IMR-90 (cell line): ENCODE measurements at regions of chr5 and their contacts with region 1.

Region 1: DNA sequence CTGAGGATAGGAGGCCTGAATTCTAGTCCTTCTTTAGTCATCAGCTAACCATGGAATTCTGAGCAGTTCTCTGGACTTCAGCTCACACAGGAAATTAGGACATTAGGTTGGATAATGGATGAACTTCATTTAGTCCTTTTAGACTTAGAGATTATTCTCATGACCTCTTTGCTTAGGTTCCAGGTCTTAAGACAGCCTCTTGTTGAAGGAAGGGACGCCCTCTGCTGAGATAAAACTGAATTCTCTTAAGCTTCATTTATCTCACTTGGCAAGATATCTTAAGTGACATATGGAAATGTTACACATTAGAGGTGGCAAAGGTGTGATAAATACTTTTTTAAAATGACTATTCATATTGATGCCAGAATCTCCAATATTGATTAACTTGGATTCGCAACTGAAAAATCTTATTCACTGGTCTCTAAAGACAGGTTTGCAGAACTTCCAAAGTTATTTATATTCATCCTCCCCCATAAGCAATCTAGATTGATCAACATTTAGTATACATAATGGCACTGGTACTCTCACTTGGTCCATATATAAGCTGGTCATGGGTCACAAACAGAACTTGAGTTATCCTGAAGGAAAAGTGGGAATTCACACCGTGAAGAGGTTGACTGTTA is 16.9 kb upstream of the ZNF366 start:
- DNase-seq: peak; percentile 88
- ATAC-seq: peak; percentile 84
- H3K4me3 ChIP-seq: no peak overlapping the region
- H3K27ac ChIP-seq: no peak overlapping the region
- H3K4me1 ChIP-seq: peaks cover 2% of the 10 kb centered on the region; the same call in 1 of the 2 replicates
- H3K27me3 ChIP-seq: no peaks in the 10 kb centered on the region
- CTCF ChIP-seq: peak; percentile 73
- POLR2A ChIP-seq: no peak
- RAD21 ChIP-seq: peak; percentile 86

Region 2: DNA sequence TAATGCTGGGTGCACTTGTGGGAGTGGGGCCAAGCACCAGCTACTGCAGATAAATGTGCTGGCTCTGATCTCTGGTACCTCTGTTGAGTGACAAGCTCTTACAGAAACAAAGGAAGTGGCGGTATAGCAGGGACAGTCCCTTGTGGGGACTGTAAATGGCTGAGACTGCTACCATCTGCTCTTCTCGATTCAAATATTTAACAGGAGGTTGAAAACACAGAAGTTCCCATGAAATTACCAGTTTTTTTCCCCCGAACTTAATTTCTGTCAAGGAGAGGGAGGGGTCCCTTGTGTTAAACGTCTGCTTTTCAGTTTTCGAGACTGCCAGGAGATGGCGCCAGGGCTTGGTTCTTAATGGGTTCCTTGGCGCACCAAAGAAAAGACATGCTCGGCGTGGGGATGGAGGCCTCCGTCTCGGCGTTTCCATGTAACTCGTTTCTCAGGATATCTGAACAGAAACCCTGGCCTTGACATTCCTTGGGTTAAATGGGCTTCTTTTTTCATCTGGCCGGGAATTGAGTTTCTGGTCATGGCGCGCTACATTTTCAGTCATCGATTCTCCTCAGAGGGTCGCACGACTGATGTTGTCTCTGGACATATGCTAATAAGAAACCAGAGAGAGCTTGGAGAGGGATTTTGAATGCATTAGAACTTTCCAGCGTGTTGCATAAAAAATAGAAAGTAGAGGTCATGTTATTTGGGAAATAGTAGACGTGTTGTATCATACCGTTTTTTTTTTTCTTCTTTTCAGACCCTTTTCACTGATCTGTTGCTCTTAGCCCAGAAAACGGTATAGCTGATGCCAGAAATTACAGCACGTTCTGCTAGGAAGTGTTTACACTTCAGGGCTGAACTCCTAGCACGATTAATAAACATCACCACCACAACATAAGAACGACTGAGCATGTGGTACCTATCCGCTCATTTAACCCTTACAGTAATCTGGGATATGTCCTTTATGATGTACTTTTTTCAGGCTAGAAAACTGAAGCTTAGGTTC is 741.0 kb before region 1 on chr5:
- CTCF ChIA-PET with region 1: no interaction called
- POLR2A ChIA-PET with region 1: no interaction called
- dilution Hi-C with region 1: no loop called
- in situ Hi-C with region 1: no loop called
- intact Hi-C with region 1: loop called (anchors 2 kb)
- DNase-seq: peak; percentile 75
- ATAC-seq: peak; percentile 95
- H3K4me3 ChIP-seq: peak overlapping the region; percentile 7; the same call in 1 of the 2 replicates
- H3K27ac ChIP-seq: 0 out of 2 replicates have a peak overlapping the region, but pooled peaks have one; percentile 7
- H3K4me1 ChIP-seq: peaks cover 2% of the 10 kb centered on the region; the same call in 1 of the 2 replicates
- H3K27me3 ChIP-seq: peaks cover 12% of the 10 kb centered on the region
- CTCF ChIP-seq: peak; percentile 85
- POLR2A ChIP-seq: 0 out of 2 replicates have a peak, but pooled peaks have one; percentile 40
- RAD21 ChIP-seq: peak; percentile 87

Region 3: DNA sequence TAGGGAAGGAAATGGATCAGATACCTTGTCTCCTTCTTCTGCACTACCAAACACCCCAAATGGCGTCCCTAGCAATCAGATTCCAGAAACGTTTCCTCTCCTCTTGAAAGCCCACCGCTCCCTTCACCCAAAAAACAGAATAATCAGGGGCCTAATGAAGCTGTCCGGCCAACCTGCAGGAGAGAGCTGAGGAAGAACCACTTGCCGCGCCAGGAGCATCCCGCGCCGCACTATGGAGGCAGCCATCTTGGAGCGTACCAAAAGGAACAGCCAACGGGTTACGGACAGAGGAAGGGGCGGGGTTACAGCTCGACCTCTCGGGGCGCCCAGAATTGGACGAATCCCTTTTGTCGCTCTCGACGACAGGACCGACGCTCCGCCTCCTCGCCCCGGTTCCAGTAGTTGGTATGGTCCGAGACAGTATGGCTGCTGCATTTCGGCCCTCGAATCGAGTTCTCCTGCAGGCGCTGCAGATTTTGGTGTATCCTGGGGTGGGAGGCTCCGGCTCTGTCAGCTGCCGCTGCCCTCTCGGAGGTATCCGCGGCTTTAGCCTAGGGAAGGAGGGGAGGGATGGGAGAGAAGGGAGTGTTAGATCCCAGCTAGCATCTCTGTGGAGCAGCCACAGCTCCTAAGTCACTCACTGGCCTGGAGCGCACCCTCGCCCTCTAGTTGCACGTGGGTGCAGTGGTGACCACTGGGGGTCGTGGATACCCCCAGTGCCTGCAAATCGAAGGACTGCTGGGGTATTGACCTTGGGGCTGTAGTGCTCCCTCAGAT is 203.9 kb before region 1 on chr5 and contains the starts of genes MRPS27 and PTCD2:
- CTCF ChIA-PET with region 1: no interaction called
- POLR2A ChIA-PET with region 1: no interaction called
- dilution Hi-C with region 1: no loop called
- in situ Hi-C with region 1: no loop called
- intact Hi-C with region 1: loop called (anchors 2 kb)
- DNase-seq: peak; percentile 99
- ATAC-seq: peak; percentile 99
- H3K4me3 ChIP-seq: peak within 1 kb of the TSS; percentile 72
- H3K27ac ChIP-seq: peak within 1 kb of the TSS; percentile 84
- H3K4me1 ChIP-seq: peaks cover 2% of the 10 kb centered on the region; the same call in 1 of the 2 replicates
- H3K27me3 ChIP-seq: no peaks in the 10 kb centered on the region
- CTCF ChIP-seq: 0 out of 2 replicates have a peak, but pooled peaks have one; percentile 3
- POLR2A ChIP-seq: peak; percentile 74
- RAD21 ChIP-seq: 0 out of 2 replicates have a peak, but pooled peaks have one; percentile 0
- total RNA-seq, gene MRPS27: 80.3 and 90.5 TPM in 2 replicates
- total RNA-seq, gene PTCD2: 9.9 and 10.0 TPM in 2 replicates

Region 4: GRCh38 chr5:72366324-72366976 is 157.6 kb before region 1 on chr5:
- CTCF ChIA-PET with region 1: interaction called, 24 read pairs
- POLR2A ChIA-PET with region 1: no interaction called
- dilution Hi-C with region 1: no loop called
- in situ Hi-C with region 1: loop called (anchors 25 kb)
- intact Hi-C with region 1: loop called (anchors 1 kb)
- DNase-seq: peak; percentile 80
- ATAC-seq: peak; percentile 78
- H3K4me3 ChIP-seq: no peak overlapping the region
- H3K27ac ChIP-seq: no peak overlapping the region
- H3K4me1 ChIP-seq: peaks cover 10% of the 10 kb centered on the region
- H3K27me3 ChIP-seq: no peaks in the 10 kb centered on the region
- CTCF ChIP-seq: peak; percentile 81
- POLR2A ChIP-seq: no peak
- RAD21 ChIP-seq: peak; percentile 80

Region 5: GRCh38 chr5:72412283-72413055 is 111.6 kb before region 1 on chr5:
- CTCF ChIA-PET with region 1: interaction called, 6 read pairs
- POLR2A ChIA-PET with region 1: no interaction called
- dilution Hi-C with region 1: no loop called
- in situ Hi-C with region 1: no loop called
- intact Hi-C with region 1: loop called (anchors 1 kb)
- DNase-seq: peak; percentile 65
- ATAC-seq: peak; percentile 69
- H3K4me3 ChIP-seq: no peak overlapping the region
- H3K27ac ChIP-seq: no peak overlapping the region
- H3K4me1 ChIP-seq: peaks cover 7% of the 10 kb centered on the region
- H3K27me3 ChIP-seq: no peaks in the 10 kb centered on the region
- CTCF ChIP-seq: peak; percentile 51
- POLR2A ChIP-seq: no peak
- RAD21 ChIP-seq: peak; percentile 71

Region 6: GRCh38 chr5:72611118-72611730 is 87.2 kb after region 1 on chr5:
- CTCF ChIA-PET with region 1: no interaction called
- POLR2A ChIA-PET with region 1: no interaction called
- dilution Hi-C with region 1: no loop called
- in situ Hi-C with region 1: no loop called
- intact Hi-C with region 1: no loop called
- DNase-seq: peak; percentile 74
- ATAC-seq: peak; percentile 97
- H3K4me3 ChIP-seq: no peak overlapping the region
- H3K27ac ChIP-seq: no peak overlapping the region
- H3K4me1 ChIP-seq: peaks cover 3% of the 10 kb centered on the region
- H3K27me3 ChIP-seq: no peaks in the 10 kb centered on the region
- CTCF ChIP-seq: peak; percentile 88
- POLR2A ChIP-seq: no peak
- RAD21 ChIP-seq: peak; percentile 83

Region 7: GRCh38 chr5:72692231-72692637 is 168.2 kb after region 1 on chr5:
- CTCF ChIA-PET with region 1: no interaction called
- POLR2A ChIA-PET with region 1: no interaction called
- dilution Hi-C with region 1: no loop called
- in situ Hi-C with region 1: no loop called
- intact Hi-C with region 1: no loop called
- DNase-seq: peak; percentile 30
- ATAC-seq: no peak
- H3K4me3 ChIP-seq: no peak overlapping the region
- H3K27ac ChIP-seq: no peak overlapping the region
- H3K4me1 ChIP-seq: peaks cover 3% of the 10 kb centered on the region
- H3K27me3 ChIP-seq: peaks cover 5% of the 10 kb centered on the region; the same call in 1 of the 2 replicates
- CTCF ChIP-seq: no peak
- POLR2A ChIP-seq: no peak
- RAD21 ChIP-seq: no peak

Region 8: DNA sequence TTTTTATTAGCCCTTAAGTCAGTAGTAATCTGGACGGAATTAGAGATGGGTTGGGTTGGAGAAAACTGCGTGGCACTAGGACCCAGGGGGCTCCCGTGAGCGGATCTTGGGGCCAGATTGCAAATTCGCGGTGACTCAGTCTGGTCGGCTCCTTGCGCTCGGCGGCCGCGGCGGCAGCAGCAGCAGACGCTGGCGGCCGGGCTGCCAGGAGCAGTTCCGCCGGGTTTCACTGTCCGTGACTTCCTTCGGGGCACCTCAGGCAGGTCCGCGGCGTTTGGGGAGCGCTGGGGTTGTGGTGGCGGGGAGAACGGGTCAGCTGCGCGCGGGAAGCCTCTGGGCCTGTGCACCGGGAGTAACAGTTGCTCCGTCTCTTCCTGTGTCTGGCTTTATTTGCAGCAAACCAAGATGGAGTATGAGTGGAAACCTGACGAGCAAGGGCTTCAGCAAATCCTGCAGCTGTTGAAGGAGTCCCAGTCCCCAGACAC is 324.0 kb after region 1 on chr5:
- CTCF ChIA-PET with region 1: no interaction called
- POLR2A ChIA-PET with region 1: no interaction called
- dilution Hi-C with region 1: no loop called
- in situ Hi-C with region 1: no loop called
- intact Hi-C with region 1: loop called (anchors 10 kb)
- DNase-seq: peak; percentile 93
- ATAC-seq: peak; percentile 81
- H3K4me3 ChIP-seq: peak overlapping the region; percentile 76
- H3K27ac ChIP-seq: peak overlapping the region; percentile 98
- H3K4me1 ChIP-seq: peaks cover 6% of the 10 kb centered on the region
- H3K27me3 ChIP-seq: no peaks in the 10 kb centered on the region
- CTCF ChIP-seq: no peak
- POLR2A ChIP-seq: peak; percentile 94
- RAD21 ChIP-seq: peak; percentile 19; the same call in 1 of the 2 replicates